ENCODE measurements at regions of chr14 and their contacts with region 1.

Region 1: GRCh38 chr14:32633224-32633859 is 304.2 kb downstream of the AKAP6 start:
- DNase-seq: no peak
- H3K4me3 Mint-ChIP-seq: no peak overlapping the region
- H3K27ac Mint-ChIP-seq: no peak overlapping the region
- H3K4me1 Mint-ChIP-seq: no peaks in the 10 kb centered on the region
- H3K27me3 Mint-ChIP-seq: no peaks in the 10 kb centered on the region

Region 2: GRCh38 chr14:32329146-32329545 is 304.2 kb before region 1 on chr14 and contains the start of gene AKAP6:
- CTCF ChIA-PET with region 1: no interaction called
- intact Hi-C with region 1: no loop called
- DNase-seq: no peak
- H3K4me3 Mint-ChIP-seq: no peak within 1 kb of the TSS
- H3K27ac Mint-ChIP-seq: no peak within 1 kb of the TSS
- H3K4me1 Mint-ChIP-seq: peaks cover 2% of the 10 kb centered on the region
- H3K27me3 Mint-ChIP-seq: no peaks in the 10 kb centered on the region
- total RNA-seq, gene AKAP6: 2.0 to 2.4 TPM

Region 3: GRCh38 chr14:32896979-32897697 is 263.8 kb after region 1 on chr14:
- CTCF ChIA-PET with region 1: interaction called, 11 read pairs
- intact Hi-C with region 1: no loop called
- DNase-seq: no peak
- H3K4me3 Mint-ChIP-seq: no peak overlapping the region
- H3K27ac Mint-ChIP-seq: no peak overlapping the region
- H3K4me1 Mint-ChIP-seq: peaks cover 7% of the 10 kb centered on the region
- H3K27me3 Mint-ChIP-seq: peaks cover 3% of the 10 kb centered on the region